Esophagus muscularis mucosa (tissue), 4 donors: ENCODE measurements at regions of chr2 and their contacts with region 1.

Region 1: GRCh38 chr2:85888684-85889626 is at the start of gene ST3GAL5:
- DNase-seq: peak; percentile 96
- H3K4me3 ChIP-seq: peak within 1 kb of the TSS; percentile 75 to 95 (median 89)
- H3K27ac ChIP-seq: peak within 1 kb of the TSS; percentile 88 to 95 (median 88)
- H3K4me1 ChIP-seq: peaks cover 26 to 70% (median 47%) of the 10 kb centered on the region in 4 donors
- H3K27me3 ChIP-seq: no peaks in the 10 kb centered on the region
- CTCF ChIP-seq: peak in 2 of 3 experiments; percentile 52 to 53
- EP300 ChIP-seq: no peak
- POLR2A ChIP-seq: no peak
- total RNA-seq, gene ST3GAL5: 11.3 to 21.6 (median 19.4) TPM

Region 2: GRCh38 chr2:85826990-85827878 is 61.7 kb before region 1 on chr2:
- intact Hi-C with region 1: loop called (anchors 5 kb)
- DNase-seq: peak; percentile 93
- H3K4me3 ChIP-seq: peak overlapping the region; percentile 14 to 42 (median 22)
- H3K27ac ChIP-seq: no peak overlapping the region
- H3K4me1 ChIP-seq: peaks cover 7 to 13% (median 9%) of the 10 kb centered on the region in 4 donors
- H3K27me3 ChIP-seq: no peaks in the 10 kb centered on the region
- CTCF ChIP-seq: peak; percentile 91 to 96 (median 93)
- EP300 ChIP-seq: no peak
- POLR2A ChIP-seq: no peak

Region 3: DNA sequence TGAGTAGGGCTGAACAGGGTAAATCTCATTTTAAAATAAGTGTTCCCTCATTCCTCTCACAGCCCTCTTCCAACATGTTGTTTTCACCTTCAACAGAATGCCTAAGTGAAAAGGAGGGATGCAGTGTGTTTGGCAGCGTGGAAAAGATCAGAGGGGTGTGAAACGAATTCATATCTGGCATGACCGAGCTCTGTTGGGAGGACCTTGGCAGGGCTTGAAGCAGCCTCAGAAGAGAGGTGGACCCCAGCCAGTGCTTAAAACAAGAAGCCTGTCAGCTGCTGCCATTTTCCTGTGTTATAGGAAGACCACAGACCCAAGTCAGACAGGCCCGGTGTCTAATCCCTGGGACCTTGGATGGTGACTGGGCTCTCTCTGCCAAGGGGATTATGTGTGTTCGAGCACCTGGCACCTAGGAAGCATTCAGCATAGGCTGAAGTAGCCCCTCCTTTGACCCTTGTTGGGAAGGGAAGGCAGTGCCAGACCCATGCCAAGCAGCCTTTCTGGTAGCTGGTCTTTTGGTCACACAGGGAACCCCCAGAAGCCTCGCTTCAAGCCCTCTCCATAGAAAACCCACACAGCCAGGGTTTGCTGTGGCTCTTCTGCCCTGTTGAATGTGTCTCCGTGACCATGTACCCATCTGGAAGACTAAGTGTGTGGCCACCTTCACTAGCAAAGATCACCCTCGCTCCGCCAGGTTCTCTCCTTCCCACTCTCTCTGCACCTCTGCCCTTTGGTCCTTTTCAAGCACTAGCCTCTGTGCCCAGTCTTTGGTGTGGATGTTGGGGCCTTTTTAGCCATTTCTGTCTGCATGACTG is 87.4 kb after region 1 on chr2:
- intact Hi-C with region 1: no loop called
- DNase-seq: no peak
- H3K4me3 ChIP-seq: no peak overlapping the region
- H3K27ac ChIP-seq: peak overlapping the region in 1 of 4 donors; percentile 5
- H3K4me1 ChIP-seq: peaks cover 17 to 31% (median 23%) of the 10 kb centered on the region in 4 donors
- H3K27me3 ChIP-seq: no peaks in the 10 kb centered on the region
- CTCF ChIP-seq: no peak
- EP300 ChIP-seq: no peak
- POLR2A ChIP-seq: no peak

Region 4: GRCh38 chr2:85999061-85999831 is 110.3 kb after region 1 on chr2:
- intact Hi-C with region 1: loop called (anchors 5 kb)
- DNase-seq: no peak
- H3K4me3 ChIP-seq: peak overlapping the region in 1 of 4 donors; percentile 5
- H3K27ac ChIP-seq: peak overlapping the region; percentile 73 to 88 (median 82)
- H3K4me1 ChIP-seq: peaks cover 47 to 64% (median 58%) of the 10 kb centered on the region in 4 donors
- H3K27me3 ChIP-seq: no peaks in the 10 kb centered on the region
- CTCF ChIP-seq: no peak
- EP300 ChIP-seq: no peak
- POLR2A ChIP-seq: no peak

Region 5: DNA sequence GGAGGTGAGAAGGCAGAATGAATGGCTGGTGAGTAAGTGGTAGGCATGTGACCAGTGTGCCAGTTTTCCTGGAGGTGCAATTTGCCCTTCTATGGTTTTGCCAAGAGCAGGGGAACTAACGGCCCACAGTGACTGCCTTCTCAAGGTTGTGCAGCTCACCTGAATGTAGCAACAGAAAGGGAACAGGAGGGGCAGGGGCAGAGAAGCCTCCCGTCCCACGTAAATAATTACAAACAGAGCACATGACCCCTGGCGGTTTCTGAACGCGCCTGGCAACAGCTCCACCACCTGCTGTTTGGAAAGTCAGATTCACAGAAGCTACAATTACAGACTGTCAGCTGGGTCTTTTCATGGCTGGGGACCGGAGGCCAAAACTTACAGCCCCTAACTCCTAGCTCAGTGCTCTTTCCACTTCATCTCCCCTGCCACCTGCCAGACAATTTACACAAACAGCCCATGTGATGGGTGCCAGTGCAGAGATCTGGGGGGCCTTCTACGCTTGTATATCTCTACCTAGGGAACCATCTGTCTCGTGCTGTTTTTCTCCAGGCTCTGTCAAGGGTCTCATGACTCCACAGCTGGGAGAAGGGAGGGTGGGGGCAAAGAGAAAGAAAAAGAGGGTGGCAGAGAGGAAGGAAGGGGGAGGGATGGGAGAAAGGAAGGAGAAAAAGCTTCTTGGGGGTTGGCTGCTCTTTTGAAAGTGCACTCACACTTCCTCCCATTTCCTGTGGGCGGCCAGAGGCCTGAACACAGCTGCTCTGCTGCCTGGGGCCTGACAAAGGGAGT is 147.1 kb after region 1 on chr2:
- intact Hi-C with region 1: loop called (anchors 2 kb)
- DNase-seq: no peak
- H3K4me3 ChIP-seq: peak overlapping the region in 1 of 4 donors; percentile 18
- H3K27ac ChIP-seq: peak overlapping the region; percentile 79 to 85 (median 80)
- H3K4me1 ChIP-seq: peaks cover 45 to 48% (median 46%) of the 10 kb centered on the region in 4 donors
- H3K27me3 ChIP-seq: no peaks in the 10 kb centered on the region
- CTCF ChIP-seq: peak in 2 of 3 experiments; percentile 10 to 39
- EP300 ChIP-seq: no peak
- POLR2A ChIP-seq: no peak

Region 6: GRCh38 chr2:86079981-86080911 is 191.3 kb after region 1 on chr2:
- intact Hi-C with region 1: loop called (anchors 2 kb)
- DNase-seq: no peak
- H3K4me3 ChIP-seq: no peak overlapping the region
- H3K27ac ChIP-seq: no peak overlapping the region
- H3K4me1 ChIP-seq: peaks cover 8 to 39% (median 26%) of the 10 kb centered on the region in 4 donors
- H3K27me3 ChIP-seq: no peaks in the 10 kb centered on the region
- CTCF ChIP-seq: peak; percentile 75 to 84 (median 81)
- EP300 ChIP-seq: no peak
- POLR2A ChIP-seq: no peak